ENCODE measurements at regions of chr12 and their contacts with region 1.

Region 1: DNA sequence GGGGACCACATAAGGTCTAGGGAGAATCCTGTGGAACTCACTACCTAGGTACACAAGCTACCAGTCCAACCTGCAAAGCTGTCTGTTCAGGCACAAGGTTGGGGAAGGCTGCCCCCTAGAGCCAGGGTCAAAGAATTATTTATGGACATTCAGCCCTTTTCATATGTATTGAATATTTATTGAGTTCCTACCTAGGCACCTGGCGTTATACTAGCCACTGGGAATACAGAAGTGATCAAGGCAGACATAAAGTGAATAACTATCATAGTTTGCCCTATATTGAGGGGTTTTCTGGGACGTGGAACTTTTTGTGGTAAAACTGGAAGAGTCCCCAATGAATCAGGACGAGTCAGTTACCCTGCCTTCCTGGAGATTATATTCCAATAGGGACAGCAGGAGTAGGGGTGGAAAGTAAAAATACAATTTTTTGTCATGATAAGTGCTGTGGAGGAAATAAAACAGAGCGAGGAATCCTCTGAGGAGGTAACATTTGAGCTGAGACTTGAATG is 5.8 kb upstream of the SLC48A1 start:
- DNase-seq: no peak
- H3K4me3 ChIP-seq: no peak overlapping the region
- H3K27ac ChIP-seq: no peak overlapping the region
- H3K4me1 ChIP-seq: peaks cover 0 to 8% of the 10 kb centered on the region in 2 donors
- H3K27me3 ChIP-seq: no peaks in the 10 kb centered on the region
- CTCF ChIP-seq: peak; percentile 37 to 56 (median 39)

Region 2: DNA sequence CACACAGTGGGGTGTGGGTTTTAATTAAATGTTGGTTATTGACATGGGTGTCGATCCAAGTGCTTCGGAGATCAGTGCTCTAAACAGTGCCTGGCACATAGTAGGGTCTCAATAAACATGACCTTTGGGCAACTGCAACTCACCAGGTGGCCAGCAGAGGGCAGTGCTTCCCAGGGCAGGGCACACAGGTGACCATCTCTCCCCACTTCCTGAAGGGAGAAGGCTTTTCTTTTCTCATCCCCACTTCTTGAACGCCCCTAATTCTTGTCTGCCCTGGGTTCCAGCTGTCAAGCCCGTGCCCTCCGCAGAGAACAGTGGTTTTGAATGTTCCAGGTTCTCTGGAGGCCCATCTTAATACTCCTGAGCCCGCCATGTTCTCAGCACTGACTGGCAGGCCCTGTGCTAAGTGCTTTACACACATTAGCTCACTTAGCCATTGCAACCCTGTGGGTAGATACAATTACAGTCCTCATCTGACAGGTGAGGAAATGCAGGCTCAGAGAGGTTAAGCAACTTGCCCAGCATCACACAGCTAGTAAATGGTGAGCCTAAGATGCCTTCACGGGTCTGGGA is 24.9 kb before region 1 on chr12:
- intact Hi-C with region 1: loop called (anchors 1 kb)
- DNase-seq: peak in 1 of 2 donors; percentile 83
- H3K4me3 ChIP-seq: no peak overlapping the region
- H3K27ac ChIP-seq: no peak overlapping the region
- H3K4me1 ChIP-seq: peaks cover 0 to 20% of the 10 kb centered on the region in 2 donors
- H3K27me3 ChIP-seq: no peaks in the 10 kb centered on the region
- CTCF ChIP-seq: peak; percentile 92 to 96 (median 93)

Region 3: DNA sequence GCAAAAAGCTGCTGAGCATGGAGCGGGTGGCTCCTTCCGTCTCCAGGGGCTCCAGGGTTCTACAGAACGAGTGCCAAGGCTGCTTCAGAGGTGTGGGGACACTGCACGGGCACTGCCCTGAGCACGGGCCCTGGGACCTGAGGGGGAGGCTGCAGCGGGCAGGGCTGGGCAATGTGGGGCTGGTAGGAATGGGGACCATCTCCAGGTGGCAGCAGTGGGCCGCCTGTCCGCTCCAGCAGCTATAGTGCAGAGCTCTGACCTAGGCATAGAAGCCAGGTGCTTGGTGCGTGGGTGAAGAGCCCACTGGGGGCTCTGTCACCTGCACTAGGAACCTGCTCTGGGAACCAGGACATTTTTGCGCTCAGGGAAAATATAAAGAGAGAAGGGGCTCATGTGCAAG is 30.2 kb after region 1 on chr12:
- intact Hi-C with region 1: no loop called
- DNase-seq: no peak
- H3K4me3 ChIP-seq: no peak overlapping the region
- H3K27ac ChIP-seq: peak overlapping the region in 1 of 2 donors; percentile 85
- H3K4me1 ChIP-seq: peaks cover 30 to 39% of the 10 kb centered on the region in 2 donors
- H3K27me3 ChIP-seq: no peaks in the 10 kb centered on the region
- CTCF ChIP-seq: peak in 2 of 3 experiments; percentile 20 to 24